Activated naive CD4-positive, alpha-beta T cell treated with anti-CD3 and anti-CD28 coated beads for 36 hours (primary cell): ENCODE measurements at regions of chr15 and their contacts with region 1.

Region 1: GRCh38 chr15:60720493-60721256 is 241.7 kb upstream of the ICE2 start:
- DNase-seq: peak; percentile 90
- H3K4me3 Mint-ChIP-seq: peak overlapping the region; percentile 49
- H3K27ac Mint-ChIP-seq: peak overlapping the region; percentile 99
- H3K4me1 Mint-ChIP-seq: peaks cover 59% of the 10 kb centered on the region
- H3K27me3 Mint-ChIP-seq: no peaks in the 10 kb centered on the region

Region 2: GRCh38 chr15:60660290-60661051 is 60.2 kb before region 1 on chr15:
- CTCF ChIA-PET with region 1: interaction called, 4 read pairs
- intact Hi-C with region 1: loop called (anchors 1 kb)
- DNase-seq: peak; percentile 26
- H3K4me3 Mint-ChIP-seq: no peak overlapping the region
- H3K27ac Mint-ChIP-seq: no peak overlapping the region
- H3K4me1 Mint-ChIP-seq: peaks cover 23% of the 10 kb centered on the region
- H3K27me3 Mint-ChIP-seq: peaks cover 3% of the 10 kb centered on the region

Region 3: GRCh38 chr15:60760646-60761504 is 40.2 kb after region 1 on chr15:
- CTCF ChIA-PET with region 1: interaction called, 4 read pairs
- intact Hi-C with region 1: loop called (anchors 2 kb)
- DNase-seq: peak; percentile 46
- H3K4me3 Mint-ChIP-seq: no peak overlapping the region
- H3K27ac Mint-ChIP-seq: peak overlapping the region; percentile 25
- H3K4me1 Mint-ChIP-seq: peaks cover 33% of the 10 kb centered on the region
- H3K27me3 Mint-ChIP-seq: no peaks in the 10 kb centered on the region

Region 4: DNA sequence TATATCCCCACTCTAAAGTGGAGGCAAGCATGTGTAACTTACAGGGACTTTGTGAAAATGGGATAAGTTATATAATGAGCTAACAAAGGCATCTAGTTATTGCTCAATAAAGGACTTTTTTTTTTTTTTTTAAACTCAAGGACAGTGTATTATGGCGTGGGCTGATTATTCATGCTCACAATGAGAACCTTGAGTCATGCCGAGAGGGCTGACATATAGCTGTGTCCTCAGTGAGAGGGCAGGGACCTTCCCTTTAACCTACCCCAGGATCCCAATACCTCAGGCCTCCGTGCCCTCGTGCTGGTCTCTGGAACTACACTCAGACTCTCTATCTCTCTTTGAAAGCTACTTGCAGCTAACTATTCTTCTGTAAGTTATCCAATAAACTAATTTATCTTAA is 78.1 kb after region 1 on chr15:
- CTCF ChIA-PET with region 1: interaction called, 18 read pairs
- intact Hi-C with region 1: loop called (anchors 1 kb)
- DNase-seq: peak; percentile 87
- H3K4me3 Mint-ChIP-seq: peak overlapping the region; percentile 34
- H3K27ac Mint-ChIP-seq: peak overlapping the region; percentile 98
- H3K4me1 Mint-ChIP-seq: peaks cover 83% of the 10 kb centered on the region
- H3K27me3 Mint-ChIP-seq: no peaks in the 10 kb centered on the region

Region 5: GRCh38 chr15:60854858-60855564 is 134.3 kb after region 1 on chr15:
- CTCF ChIA-PET with region 1: no interaction called
- intact Hi-C with region 1: loop called (anchors 1 kb)
- DNase-seq: peak; percentile 60
- H3K4me3 Mint-ChIP-seq: no peak overlapping the region
- H3K27ac Mint-ChIP-seq: peak overlapping the region; percentile 13
- H3K4me1 Mint-ChIP-seq: peaks cover 64% of the 10 kb centered on the region
- H3K27me3 Mint-ChIP-seq: no peaks in the 10 kb centered on the region